ENCODE measurements at regions of chr18 and their contacts with region 1.

Region 1: GRCh38 chr18:76620321-76621170 is 125.5 kb upstream of the ZNF516 start:
- DNase-seq: peak in 8 of 10 donors; percentile 26 to 93 (median 52)

Region 2: DNA sequence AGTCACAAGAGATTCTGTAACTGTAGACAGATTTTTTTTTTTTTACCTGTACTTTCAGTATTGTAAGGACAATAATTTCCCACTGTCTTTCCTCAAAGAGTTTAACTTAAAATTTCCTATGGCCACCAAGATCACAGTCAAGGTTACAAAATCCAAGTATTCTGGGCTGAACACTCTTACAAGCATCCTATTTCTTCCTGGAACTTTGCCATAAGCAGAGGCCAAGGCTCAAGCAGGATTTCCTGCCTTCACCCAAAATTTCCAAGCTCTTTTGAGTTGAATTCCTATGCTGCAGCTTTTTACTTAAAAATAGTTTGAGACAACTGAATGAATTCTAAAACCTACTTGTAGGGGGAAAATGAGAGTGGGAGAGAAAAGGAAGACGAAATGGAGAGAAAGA is 424.9 kb before region 1 on chr18:
- intact Hi-C with region 1: no loop called
- DNase-seq: no peak

Region 3: DNA sequence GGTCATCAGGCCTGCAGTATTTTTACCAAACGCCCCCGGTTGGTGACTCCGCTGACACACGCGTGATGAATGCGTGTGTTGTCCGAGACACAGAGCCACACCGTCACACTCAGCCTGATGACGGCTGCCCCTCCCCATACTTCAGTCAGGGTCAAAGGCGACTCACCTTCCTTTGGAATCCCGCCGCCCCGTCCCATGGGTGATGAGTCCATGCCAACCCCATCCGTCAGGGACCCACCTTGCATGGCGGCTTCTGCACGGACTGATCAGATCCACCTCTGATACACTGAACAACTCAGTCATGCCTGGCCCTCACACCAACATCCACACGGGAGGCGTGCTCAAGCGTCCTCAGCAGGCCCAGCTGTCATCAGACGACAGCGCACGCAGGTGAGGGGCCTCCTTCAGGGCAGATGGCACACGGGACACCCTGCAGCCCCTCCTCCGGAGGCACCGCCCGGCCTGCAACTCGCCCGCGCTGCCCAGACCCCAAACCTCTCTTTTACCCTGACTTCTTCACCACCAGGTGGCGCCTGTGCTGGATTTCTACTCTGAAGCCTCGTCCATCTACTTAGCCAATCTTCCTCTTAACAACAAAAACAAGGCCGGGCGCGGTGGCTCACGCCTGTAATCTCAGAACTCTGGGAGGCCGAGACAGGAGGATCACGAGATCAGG is 214.7 kb before region 1 on chr18:
- intact Hi-C with region 1: loop called (anchors 10 kb)
- DNase-seq: peak in 3 of 10 donors; percentile 47 to 91 (median 65)

Region 4: GRCh38 chr18:76480913-76481312 is 139.6 kb before region 1 on chr18:
- intact Hi-C with region 1: loop called (anchors 10 kb)
- DNase-seq: peak in 1 of 10 donors; percentile 57

Region 5: GRCh38 chr18:76686737-76687262 is 66.3 kb after region 1 on chr18:
- intact Hi-C with region 1: no loop called
- DNase-seq: peak in 8 of 10 donors; percentile 32 to 88 (median 50)